A549 (cell line): ENCODE measurements at regions of chr17 and their contacts with region 1.

Region 1: GRCh38 chr17:36486204-36487194 is at the start of gene ZNHIT3:
- DNase-seq: peak; percentile 95 to 97
- ATAC-seq: peak; percentile 88 to 93
- H3K4me3 ChIP-seq: peak within 1 kb of the TSS; percentile 86
- H3K27ac ChIP-seq: peak within 1 kb of the TSS; percentile 83 to 95
- H3K4me1 ChIP-seq: peaks cover 14% of the 10 kb centered on the region
- CTCF ChIP-seq: no peak
- EP300 ChIP-seq: no peak
- POLR2A ChIP-seq: peak; percentile 89
- RAD21 ChIP-seq: no peak
- polyA plus RNA-seq, gene ZNHIT3: 147 and 166 TPM in 2 replicates

Region 2: GRCh38 chr17:35981908-35982330 is 504.6 kb before region 1 on chr17:
- CTCF ChIA-PET with region 1: interaction called, 10 read pairs
- POLR2A ChIA-PET with region 1: no interaction called
- DNase-seq: no peak
- ATAC-seq: peak in 1 of 2 experiments; percentile 54; a peak in 2 of 6 replicates
- H3K4me3 ChIP-seq: no peak overlapping the region
- H3K27ac ChIP-seq: no peak overlapping the region
- H3K4me1 ChIP-seq: no peaks in the 10 kb centered on the region
- CTCF ChIP-seq: no peak
- EP300 ChIP-seq: no peak
- POLR2A ChIP-seq: no peak
- RAD21 ChIP-seq: peak in 1 of 2 experiments; percentile 29; a peak in 2 of 5 replicates

Region 3: DNA sequence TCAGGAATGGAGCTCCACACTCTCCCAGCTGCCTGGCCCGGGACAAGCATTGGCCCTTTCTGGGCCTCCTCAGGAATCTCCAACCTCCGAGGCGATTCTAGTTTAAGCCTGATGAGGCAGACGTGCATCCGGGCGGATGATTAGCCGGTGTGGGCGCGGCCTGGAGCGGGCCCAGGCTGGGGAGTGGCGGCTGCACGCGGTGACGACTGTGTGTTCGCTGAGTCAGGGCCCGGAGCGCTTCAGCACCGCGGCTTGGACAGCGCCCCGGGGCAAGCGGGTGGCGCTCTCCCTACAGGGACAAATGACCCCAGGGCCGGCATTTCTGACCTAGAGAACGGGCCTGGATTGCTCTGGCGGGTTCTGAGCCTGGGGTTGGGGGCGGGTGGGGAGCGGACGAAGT is 22.6 kb before region 1 on chr17:
- CTCF ChIA-PET with region 1: interaction called, 54 read pairs
- POLR2A ChIA-PET with region 1: no interaction called
- DNase-seq: peak; percentile 74 to 76
- ATAC-seq: peak; percentile 82 to 91
- H3K4me3 ChIP-seq: no peak overlapping the region
- H3K27ac ChIP-seq: no peak overlapping the region
- H3K4me1 ChIP-seq: no peaks in the 10 kb centered on the region
- CTCF ChIP-seq: no peak
- EP300 ChIP-seq: no peak
- POLR2A ChIP-seq: no peak
- RAD21 ChIP-seq: no peak

Region 4: GRCh38 chr17:36475346-36475970 is 11.0 kb before region 1 on chr17:
- CTCF ChIA-PET with region 1: interaction called, 36 read pairs
- POLR2A ChIA-PET with region 1: interaction called, 3 read pairs
- DNase-seq: no peak
- ATAC-seq: peak in 1 of 2 experiments; percentile 28; a peak in 2 of 6 replicates
- H3K4me3 ChIP-seq: no peak overlapping the region
- H3K27ac ChIP-seq: no peak overlapping the region
- H3K4me1 ChIP-seq: no peaks in the 10 kb centered on the region
- CTCF ChIP-seq: no peak
- EP300 ChIP-seq: no peak
- POLR2A ChIP-seq: no peak
- RAD21 ChIP-seq: no peak

Region 5: DNA sequence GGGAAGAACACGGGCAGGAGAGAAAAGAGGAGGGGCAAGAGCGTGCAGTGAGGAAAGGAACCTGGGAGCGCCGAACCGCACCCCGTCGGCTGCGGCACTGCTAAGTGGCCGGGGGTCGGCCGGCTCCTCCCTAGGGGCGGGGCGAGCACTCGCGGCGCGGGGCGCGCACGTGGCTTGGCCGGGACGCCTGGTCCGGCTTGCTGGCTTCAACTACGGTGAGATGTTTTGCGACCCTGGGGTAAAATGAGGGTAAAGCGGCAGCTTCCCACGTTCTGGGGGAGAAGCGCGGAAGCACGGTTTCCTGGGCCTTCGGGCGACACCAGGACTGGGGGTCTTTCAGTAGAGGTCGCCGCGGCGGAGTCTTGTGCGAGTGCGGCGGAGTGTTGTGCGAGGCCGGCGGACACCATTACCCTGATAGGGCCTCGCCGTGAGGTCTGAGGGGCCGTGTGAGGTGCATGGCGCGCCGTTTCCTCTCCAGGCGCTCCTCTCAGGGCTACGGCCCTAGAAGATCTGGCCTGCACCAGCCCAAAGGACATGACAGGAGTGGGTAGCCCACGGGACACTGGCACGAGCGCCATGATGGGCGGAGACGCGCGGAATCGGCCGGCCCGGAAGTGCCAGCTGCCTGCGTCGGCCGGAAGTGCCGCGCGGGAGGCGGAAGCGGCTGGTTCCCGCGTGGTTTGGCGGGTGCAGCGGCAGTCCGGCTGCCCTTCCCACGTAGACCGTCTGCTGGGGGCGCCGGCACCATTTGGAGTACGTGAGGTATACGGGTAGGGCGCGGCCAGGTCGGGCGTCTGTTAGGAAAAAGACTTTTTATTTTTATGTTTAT is 48.6 kb after region 1 on chr17 and contains the starts of genes MYO19 and PIGW:
- CTCF ChIA-PET with region 1: interaction called, 13 read pairs
- POLR2A ChIA-PET with region 1: interaction called, 4 read pairs
- DNase-seq: peak; percentile 91 to 96
- ATAC-seq: peak; percentile 88 to 93
- H3K4me3 ChIP-seq: peak within 1 kb of the TSS; percentile 67
- H3K27ac ChIP-seq: peak within 1 kb of the TSS; percentile 91 to 95
- H3K4me1 ChIP-seq: peaks cover 9% of the 10 kb centered on the region; the same call in 2 of the 3 replicates
- CTCF ChIP-seq: no peak
- EP300 ChIP-seq: no peak
- POLR2A ChIP-seq: peak; percentile 90
- RAD21 ChIP-seq: no peak
- polyA plus RNA-seq, gene MYO19: 99.0 and 124 TPM in 2 replicates
- polyA plus RNA-seq, gene PIGW: 26.1 and 30.0 TPM in 2 replicates